GM12878 (cell line): ENCODE measurements at regions of chr3 and their contacts with region 1.

Region 1: DNA sequence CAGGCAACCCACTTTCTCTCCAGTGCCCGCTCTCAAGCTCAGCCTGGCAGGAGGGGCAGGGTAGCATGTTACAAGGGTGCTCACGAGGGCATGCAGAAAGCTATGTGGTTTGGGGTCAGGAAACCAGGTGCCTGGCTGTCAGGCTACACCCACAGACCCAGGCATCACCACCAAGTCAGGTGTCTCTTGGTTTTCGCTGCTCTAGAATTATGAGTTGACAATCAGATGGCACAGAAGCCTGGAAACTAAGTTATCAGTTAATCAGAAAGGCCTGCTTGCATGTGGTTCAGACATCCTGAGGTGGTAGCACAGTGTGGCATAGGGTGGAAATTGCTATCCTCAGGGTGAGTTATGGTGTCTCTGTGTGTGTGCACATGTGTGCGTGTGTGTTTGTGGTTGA is 16.2 kb upstream of the CCR9 start:
- DNase-seq: no peak
- ATAC-seq: peak; percentile 64
- H3K4me3 ChIP-seq: no peak overlapping the region
- H3K27ac ChIP-seq: no peak overlapping the region
- H3K4me1 ChIP-seq: peaks cover 43% of the 10 kb centered on the region
- H3K27me3 ChIP-seq: no peaks in the 10 kb centered on the region; a peak in 1 of 4 replicates
- CTCF ChIP-seq: no peak
- EP300 ChIP-seq: peak in 1 of 2 experiments; percentile 62; a peak in 2 of 4 replicates
- POLR2A ChIP-seq: no peak
- RAD21 ChIP-seq: no peak

Region 2: GRCh38 chr3:45887759-45888511 is 17.8 kb after region 1 on chr3:
- CTCF ChIA-PET with region 1: interaction called, 6 read pairs
- POLR2A ChIA-PET with region 1: interaction called, 15 read pairs
- RAD21 ChIA-PET with region 1: interaction called, 89 read pairs
- SMC1A ChIA-PET with region 1: interaction called, 105 read pairs
- in situ Hi-C with region 1: no loop called
- intact Hi-C with region 1: no loop called
- DNase-seq: no peak
- ATAC-seq: no peak
- H3K4me3 ChIP-seq: no peak overlapping the region
- H3K27ac ChIP-seq: no peak overlapping the region
- H3K4me1 ChIP-seq: peaks cover 42% of the 10 kb centered on the region
- H3K27me3 ChIP-seq: no peaks in the 10 kb centered on the region
- CTCF ChIP-seq: no peak
- EP300 ChIP-seq: no peak
- POLR2A ChIP-seq: no peak
- RAD21 ChIP-seq: no peak